Activated CD4-positive, alpha-beta T cell treated with anti-CD3 and anti-CD28 coated beads, Interleukin-2, amount 10 ng/mL, durations not matched to agents 24 days and 14 days (primary cell): ENCODE measurements at regions of chr15 and their contacts with region 1.

Region 1: GRCh38 chr15:23642413-23643044 is 5.1 kb downstream of the MAGEL2 start:
- DNase-seq: peak; percentile 78
- H3K4me3 Mint-ChIP-seq: no peak overlapping the region
- H3K27ac Mint-ChIP-seq: no peak overlapping the region
- H3K4me1 Mint-ChIP-seq: no peaks in the 10 kb centered on the region
- H3K27me3 Mint-ChIP-seq: no peaks in the 10 kb centered on the region

Region 2: GRCh38 chr15:23424111-23424904 is 218.2 kb before region 1 on chr15:
- intact Hi-C with region 1: no loop called
- DNase-seq: no peak
- H3K4me3 Mint-ChIP-seq: no peak overlapping the region
- H3K27ac Mint-ChIP-seq: no peak overlapping the region
- H3K4me1 Mint-ChIP-seq: no peaks in the 10 kb centered on the region
- H3K27me3 Mint-ChIP-seq: no peaks in the 10 kb centered on the region

Region 3: GRCh38 chr15:23954931-23955330 is 312.4 kb after region 1 on chr15:
- intact Hi-C with region 1: no loop called
- DNase-seq: no peak
- H3K4me3 Mint-ChIP-seq: no peak overlapping the region
- H3K27ac Mint-ChIP-seq: no peak overlapping the region
- H3K4me1 Mint-ChIP-seq: no peaks in the 10 kb centered on the region
- H3K27me3 Mint-ChIP-seq: no peaks in the 10 kb centered on the region

Region 4: DNA sequence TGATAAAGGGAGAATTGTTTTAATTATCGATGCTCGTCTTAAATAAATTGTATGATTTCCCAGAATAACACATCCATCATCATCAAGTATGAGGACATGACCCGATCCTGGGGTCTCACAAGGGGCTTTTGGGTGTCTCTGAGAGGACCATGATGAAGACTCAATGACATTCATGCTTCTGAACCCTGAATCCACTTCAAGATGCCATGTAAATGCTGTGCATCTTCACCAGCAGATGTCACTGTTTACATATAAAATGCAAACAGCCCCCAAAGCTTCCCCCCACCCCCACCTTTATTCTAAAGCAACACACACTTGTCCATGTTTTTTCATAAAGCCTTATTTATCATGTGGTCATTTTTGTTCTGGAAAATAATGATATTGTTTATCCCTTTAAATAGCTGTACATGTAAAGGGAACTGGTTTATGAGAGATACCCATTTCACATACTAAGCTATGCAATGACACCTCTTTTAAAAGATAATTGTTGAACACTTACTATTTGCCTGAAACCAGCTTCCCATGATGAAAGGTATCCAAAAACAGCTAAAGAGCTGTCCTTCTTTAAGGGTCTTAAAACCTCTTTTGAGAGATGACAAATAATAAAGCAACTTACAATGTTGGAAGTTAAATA is 1866.0 kb after region 1 on chr15:
- intact Hi-C with region 1: loop called (anchors 10 kb)
- DNase-seq: no peak
- H3K4me3 Mint-ChIP-seq: no peak overlapping the region
- H3K27ac Mint-ChIP-seq: no peak overlapping the region
- H3K4me1 Mint-ChIP-seq: no peaks in the 10 kb centered on the region
- H3K27me3 Mint-ChIP-seq: no peaks in the 10 kb centered on the region